GM10248 (cell line): ENCODE measurements at regions of chr19 and their contacts with region 1.

Region 1: GRCh38 chr19:39174142-39174903 is 22.4 kb upstream of the NCCRP1 start:
- DNase-seq: no peak
- CTCF ChIP-seq: no peak

Region 2: DNA sequence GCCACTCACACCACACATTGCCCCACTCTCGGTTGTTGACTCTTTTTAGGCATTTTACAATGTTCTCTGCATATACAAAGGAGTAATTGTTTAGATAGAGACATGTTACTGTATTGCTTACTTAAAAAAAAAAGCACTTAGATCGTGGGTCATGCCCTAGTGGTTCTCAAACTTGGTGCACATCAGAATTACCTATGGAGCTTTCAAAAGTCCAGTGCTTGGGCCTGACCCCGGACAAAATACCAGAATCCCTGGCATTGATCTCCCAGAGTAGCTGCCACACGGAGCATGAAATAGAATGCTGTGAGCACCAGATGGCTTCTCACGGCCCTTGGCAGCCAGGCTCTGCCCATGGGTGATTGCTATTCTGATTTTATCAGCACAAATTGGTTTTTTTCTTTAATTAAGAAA is 70.1 kb before region 1 on chr19:
- CTCF ChIA-PET with region 1: no interaction called
- POLR2A ChIA-PET with region 1: no interaction called
- DNase-seq: no peak
- CTCF ChIP-seq: no peak

Region 3: DNA sequence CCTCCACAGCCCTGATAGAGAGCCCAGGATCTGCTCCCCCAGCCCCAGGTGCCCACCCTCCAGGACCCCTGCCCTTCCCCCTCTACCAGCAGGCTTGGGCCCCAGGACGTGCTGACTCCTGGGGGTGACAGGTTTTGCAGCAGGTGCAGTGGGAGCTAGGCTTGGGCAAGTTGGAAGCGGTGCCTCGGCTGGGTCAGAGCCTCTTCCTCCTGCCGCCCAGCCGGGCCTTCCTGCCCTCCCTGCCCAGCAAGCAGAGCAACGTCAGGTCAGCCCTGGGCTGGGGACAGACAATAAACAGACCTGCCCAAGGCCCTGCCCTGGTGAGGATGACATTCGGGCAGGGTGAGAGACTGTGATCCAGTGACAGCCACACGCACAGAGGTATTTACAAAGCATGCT is 13.2 kb after region 1 on chr19:
- CTCF ChIA-PET with region 1: interaction called, 10 read pairs
- POLR2A ChIA-PET with region 1: no interaction called
- DNase-seq: no peak
- CTCF ChIP-seq: no peak

Region 4: DNA sequence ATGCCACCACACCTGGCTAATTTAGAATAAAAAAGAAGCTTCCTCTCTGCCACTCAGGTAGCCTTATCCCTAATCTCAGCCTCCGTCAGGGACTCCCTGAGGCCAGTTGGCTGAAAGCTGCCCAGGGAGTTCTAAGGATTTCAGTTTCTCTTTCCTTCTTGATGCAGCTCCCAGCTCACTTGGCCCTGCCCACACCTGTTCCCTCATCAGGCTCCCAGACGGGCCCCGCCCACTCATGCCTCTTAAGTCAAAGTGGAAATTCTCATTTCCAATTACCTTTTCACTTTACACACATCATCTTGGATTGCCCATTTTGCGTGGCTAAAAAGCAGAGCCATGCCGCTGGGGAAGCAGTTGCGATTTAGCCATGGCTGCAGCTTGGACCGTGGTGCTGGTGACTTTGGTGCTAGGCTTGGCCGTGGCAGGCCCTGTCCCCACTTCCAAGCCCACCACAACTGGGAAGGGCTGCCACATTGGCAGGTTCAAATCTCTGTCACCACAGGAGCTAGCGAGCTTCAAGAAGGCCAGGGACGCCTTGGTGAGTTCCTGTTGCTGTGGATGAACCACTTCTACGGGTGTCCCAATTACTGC is 121.8 kb after region 1 on chr19 and contains the start of gene IFNL1:
- CTCF ChIA-PET with region 1: no interaction called
- POLR2A ChIA-PET with region 1: no interaction called
- DNase-seq: no peak
- CTCF ChIP-seq: no peak